PC-9 (cell line): ENCODE measurements at regions of chr13 and their contacts with region 1.

Region 1: DNA sequence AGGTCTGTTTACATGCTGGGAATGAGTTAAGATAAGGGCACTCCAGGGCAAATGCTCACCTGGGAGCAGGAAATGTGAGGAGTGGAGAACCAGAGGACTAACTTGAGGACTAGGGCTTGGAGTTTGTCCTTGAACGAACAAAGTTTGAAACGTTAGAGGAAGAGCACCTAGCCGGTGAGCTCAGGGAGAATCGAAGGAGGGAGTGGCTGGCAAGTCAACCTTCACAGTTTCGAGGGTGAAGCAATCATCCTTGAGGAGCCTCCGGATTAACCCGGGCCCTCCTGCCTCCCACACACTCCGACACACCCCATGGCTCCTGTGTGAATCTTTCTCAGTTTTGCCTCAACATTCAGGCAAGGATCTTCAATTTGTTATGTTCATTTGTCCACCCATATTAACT is 58.6 kb downstream of the LMO7 start:
- DNase-seq: no peak
- H3K4me3 ChIP-seq: no peak overlapping the region
- H3K27ac ChIP-seq: no peak overlapping the region
- H3K4me1 ChIP-seq: peaks cover 24% of the 10 kb centered on the region
- H3K27me3 ChIP-seq: no peaks in the 10 kb centered on the region
- CTCF ChIP-seq: no peak

Region 2: DNA sequence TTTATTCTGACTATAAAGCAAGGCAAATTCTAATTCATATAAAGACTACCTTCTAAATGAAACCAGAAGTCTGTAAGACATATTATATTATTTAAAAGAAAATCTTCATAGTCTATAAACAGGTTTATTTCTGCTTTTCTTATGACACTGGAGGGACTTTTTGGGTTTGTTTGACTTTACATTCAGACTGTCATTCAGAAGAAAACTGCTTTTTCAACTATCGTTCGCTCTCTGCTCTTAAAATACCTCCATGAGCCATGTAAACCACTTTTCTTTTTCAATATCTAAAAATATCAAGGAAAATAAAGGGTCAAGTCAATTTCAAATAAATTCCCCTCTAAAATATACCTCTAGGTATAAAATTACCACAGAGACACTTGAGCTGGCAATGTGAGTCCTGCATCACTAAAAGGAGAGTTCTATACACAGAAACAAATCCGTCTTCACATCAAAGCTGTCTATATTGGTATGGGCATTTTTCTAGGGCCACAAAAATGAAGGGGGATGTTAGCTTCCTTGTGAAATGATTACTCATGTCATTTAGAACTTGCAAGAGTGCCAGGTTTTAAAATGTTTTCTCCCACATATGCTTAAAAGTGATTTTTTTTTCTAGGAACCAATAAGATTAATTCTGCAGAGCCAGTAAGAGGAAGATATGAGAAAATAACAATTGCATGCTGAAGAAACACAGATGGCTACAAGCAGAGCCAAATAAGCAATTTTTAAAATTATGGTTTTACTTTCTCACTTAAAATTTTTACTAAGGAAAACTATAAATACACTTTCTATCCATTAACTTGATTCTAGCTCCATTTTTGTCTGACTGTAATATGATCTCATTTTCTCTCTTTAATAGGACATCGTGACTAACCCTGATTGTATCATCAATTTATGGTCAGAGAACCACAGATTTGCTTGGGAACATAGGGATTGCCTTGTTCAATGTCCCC is 394.5 kb before region 1 on chr13:
- CTCF ChIA-PET with region 1: no interaction called
- POLR2A ChIA-PET with region 1: no interaction called
- intact Hi-C with region 1: no loop called
- DNase-seq: no peak
- H3K4me3 ChIP-seq: no peak overlapping the region
- H3K27ac ChIP-seq: no peak overlapping the region
- H3K4me1 ChIP-seq: no peaks in the 10 kb centered on the region
- H3K27me3 ChIP-seq: no peaks in the 10 kb centered on the region
- CTCF ChIP-seq: no peak

Region 3: DNA sequence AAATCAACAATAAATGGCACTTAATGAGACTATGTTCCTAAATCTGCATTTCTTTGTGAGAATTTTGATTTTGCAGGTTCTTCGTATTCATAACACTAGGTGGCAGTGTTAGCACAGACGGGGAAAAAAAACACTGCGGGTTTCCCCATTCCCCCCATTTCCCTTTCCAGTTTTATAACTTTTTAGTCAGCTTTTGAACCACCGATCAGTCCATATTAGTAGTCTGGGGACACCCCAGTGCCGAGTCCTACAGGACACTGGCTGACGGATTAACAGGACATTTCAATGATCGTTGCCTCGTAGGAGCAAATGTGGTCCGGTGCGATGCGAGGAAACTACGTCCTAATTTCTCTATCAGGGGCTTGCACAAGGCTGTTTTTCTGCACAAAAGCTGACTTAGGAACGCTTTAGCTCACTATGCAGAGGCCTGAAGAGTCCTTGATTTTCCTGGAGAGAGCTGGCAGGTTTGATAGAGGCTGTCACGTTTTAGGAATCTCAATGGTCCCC is 175.7 kb after region 1 on chr13:
- CTCF ChIA-PET with region 1: no interaction called
- POLR2A ChIA-PET with region 1: no interaction called
- intact Hi-C with region 1: loop called (anchors 2 kb)
- DNase-seq: peak in 1 of 2 experiments; percentile 25
- H3K4me3 ChIP-seq: no peak overlapping the region; the same call in 1 of the 2 replicates
- H3K27ac ChIP-seq: no peak overlapping the region
- H3K4me1 ChIP-seq: no peaks in the 10 kb centered on the region; the same call in 1 of the 2 replicates
- H3K27me3 ChIP-seq: no peaks in the 10 kb centered on the region
- CTCF ChIP-seq: peak; percentile 85